PC-9 (cell line): ENCODE measurements at regions of chr16 and their contacts with region 1.

Region 1: GRCh38 chr16:1942810-1943726 is at the start of gene MSRB1:
- DNase-seq: peak; percentile 93 to 100
- H3K4me3 ChIP-seq: peak within 1 kb of the TSS; percentile 81
- H3K27ac ChIP-seq: peak within 1 kb of the TSS; percentile 61
- H3K4me1 ChIP-seq: peaks cover 18% of the 10 kb centered on the region
- H3K27me3 ChIP-seq: no peaks in the 10 kb centered on the region
- CTCF ChIP-seq: no peak
- total RNA-seq, gene MSRB1: 49.4 and 54.9 TPM in 2 replicates

Region 2: DNA sequence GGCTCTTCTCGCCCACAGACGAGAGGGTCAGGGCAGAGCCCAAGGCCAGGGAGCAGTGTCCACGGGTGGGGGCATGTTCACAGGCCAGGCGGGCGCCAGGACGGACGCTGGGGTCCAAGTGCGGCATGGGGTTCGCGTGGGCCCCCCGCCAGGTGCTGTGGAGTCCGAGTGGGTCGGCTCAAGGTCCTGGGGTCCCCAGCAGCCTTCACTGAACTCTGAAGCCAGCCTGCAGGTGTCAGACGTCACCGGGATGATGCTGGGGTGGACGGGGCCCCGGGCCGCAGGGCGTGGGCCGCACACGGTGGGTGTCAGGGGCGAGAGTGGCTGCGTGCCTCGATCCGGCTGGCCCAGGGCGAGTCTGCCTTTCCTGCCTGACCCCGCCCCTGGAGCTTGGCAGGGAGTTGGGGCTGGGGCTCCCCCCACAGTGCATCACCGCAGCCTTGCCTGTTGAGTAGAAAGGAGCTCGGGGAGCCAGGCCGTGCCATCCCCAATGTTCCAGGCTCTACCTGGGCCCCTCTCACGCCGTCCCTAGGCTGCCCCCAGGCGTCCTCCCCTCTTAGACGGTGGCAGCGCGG is 771.1 kb before region 1 on chr16:
- CTCF ChIA-PET with region 1: no interaction called
- POLR2A ChIA-PET with region 1: interaction called, 13 read pairs
- intact Hi-C with region 1: no loop called
- DNase-seq: no peak
- H3K4me3 ChIP-seq: no peak overlapping the region
- H3K27ac ChIP-seq: no peak overlapping the region
- H3K4me1 ChIP-seq: no peaks in the 10 kb centered on the region
- H3K27me3 ChIP-seq: peaks cover 82% of the 10 kb centered on the region
- CTCF ChIP-seq: no peak

Region 3: DNA sequence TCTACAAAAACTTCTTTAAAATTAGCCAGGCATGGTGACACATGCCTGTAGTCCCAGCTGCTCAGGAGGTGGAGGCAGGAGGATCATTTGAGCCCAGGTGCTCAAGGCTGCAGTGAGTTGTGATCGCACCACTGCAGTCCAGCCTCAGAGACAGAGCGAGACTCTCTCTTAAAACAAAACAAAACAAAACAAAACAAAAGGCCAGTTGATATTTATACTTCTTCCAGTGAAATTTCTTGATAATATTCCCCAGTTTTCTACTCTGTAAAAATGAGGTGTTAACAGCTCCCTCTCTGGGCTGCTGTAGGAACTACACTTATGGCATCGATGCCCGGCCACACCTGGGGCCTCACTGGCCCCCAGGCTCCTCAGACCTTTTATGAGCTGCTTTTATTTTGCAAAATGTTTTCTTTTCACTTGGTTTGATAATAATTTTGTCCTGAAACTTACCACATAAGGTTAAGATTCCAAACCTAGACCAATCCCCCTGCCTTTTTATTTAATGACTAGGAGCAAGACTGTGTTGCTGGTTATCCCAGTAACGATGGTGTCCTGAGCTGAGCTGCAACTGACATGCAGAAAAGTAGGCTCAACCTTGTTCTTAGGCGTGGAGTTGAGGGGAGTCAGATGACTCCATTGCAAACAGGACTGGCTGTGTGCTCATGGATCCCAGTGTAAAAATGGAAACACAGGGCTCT is 219.5 kb before region 1 on chr16:
- CTCF ChIA-PET with region 1: interaction called, 13 read pairs
- POLR2A ChIA-PET with region 1: no interaction called
- intact Hi-C with region 1: no loop called
- DNase-seq: peak in 1 of 2 experiments; percentile 68
- H3K4me3 ChIP-seq: no peak overlapping the region
- H3K27ac ChIP-seq: peak overlapping the region; percentile 67; the same call in 1 of the 2 replicates
- H3K4me1 ChIP-seq: peaks cover 42% of the 10 kb centered on the region
- H3K27me3 ChIP-seq: no peaks in the 10 kb centered on the region
- CTCF ChIP-seq: peak; percentile 90

Region 4: DNA sequence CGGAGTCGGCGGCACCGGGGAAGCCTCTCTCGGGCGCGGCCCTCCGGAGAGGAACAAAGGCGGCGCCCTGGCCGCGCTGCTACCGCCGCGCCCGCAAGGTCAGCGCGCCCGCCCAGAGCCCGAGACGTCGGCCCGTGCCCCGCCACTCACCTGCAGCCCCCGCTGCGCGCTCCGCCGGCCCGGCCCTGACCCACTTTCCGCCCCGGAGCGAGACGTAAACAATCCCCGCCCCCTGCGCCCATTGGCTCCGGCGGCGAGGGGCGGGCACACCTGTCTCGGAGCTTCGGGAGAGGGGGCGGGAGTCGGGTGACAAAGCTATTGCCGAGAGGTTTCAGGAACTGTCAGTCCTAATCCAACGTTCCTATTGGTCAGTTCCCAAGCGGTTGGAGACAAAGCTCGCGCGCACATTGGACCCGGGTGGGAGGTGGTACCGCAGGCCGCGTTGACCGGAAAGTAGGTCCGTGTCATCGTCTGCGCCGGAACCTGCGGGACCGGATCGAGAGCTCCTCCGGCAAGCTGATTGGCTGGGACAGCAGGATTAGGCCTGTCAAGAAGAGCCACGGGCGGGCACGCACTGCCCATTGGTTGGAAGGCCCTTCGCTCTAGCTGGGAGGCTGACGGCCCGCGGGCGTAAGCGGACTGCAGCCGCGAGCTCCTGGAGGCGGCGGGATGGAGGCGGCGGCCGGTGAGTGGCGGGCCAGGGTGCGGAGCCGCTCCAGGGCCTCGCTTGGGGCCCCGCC is 160.5 kb before region 1 on chr16 and contains the starts of genes NUBP2 and SPSB3:
- CTCF ChIA-PET with region 1: no interaction called
- POLR2A ChIA-PET with region 1: no interaction called
- intact Hi-C with region 1: loop called (anchors 5 kb)
- DNase-seq: peak; percentile 99 to 100
- H3K4me3 ChIP-seq: peak within 1 kb of the TSS; percentile 93
- H3K27ac ChIP-seq: peak within 1 kb of the TSS; percentile 50; the same call in 1 of the 2 replicates
- H3K4me1 ChIP-seq: peaks cover 15% of the 10 kb centered on the region
- H3K27me3 ChIP-seq: no peaks in the 10 kb centered on the region
- CTCF ChIP-seq: no peak
- total RNA-seq, gene NUBP2: 80.0 and 103 TPM in 2 replicates
- total RNA-seq, gene SPSB3: 58.2 and 86.6 TPM in 2 replicates

Region 5: DNA sequence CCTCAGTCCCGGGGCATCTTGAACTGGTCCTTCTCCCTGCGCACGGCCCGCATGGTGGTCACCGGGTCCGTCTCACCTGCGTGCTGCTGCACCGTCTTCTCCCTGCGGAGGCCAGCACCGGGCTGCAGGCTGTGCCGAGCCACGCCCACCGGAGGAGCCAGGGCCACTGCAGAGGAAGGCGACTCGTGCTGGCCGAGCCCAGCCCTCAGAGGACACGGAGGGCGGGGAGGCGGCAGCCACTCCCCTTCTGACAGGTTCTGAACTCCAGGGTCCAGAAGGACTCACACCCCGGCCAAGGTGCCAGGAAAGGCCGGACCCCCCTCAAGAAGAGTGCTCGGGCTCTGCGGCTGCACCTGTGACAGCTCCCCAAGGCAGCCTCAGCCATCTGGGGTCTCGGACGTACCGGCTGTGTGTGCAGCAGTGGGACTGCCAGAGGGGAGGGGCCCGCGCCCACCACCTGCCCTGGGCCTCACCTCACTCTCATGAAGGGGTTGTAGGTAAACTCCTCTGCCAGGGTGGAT is 133.7 kb before region 1 on chr16:
- CTCF ChIA-PET with region 1: no interaction called
- POLR2A ChIA-PET with region 1: no interaction called
- intact Hi-C with region 1: no loop called
- DNase-seq: no peak
- H3K4me3 ChIP-seq: no peak overlapping the region
- H3K27ac ChIP-seq: no peak overlapping the region
- H3K4me1 ChIP-seq: no peaks in the 10 kb centered on the region
- H3K27me3 ChIP-seq: no peaks in the 10 kb centered on the region
- CTCF ChIP-seq: no peak

Region 6: GRCh38 chr16:1959269-1960049 is 16.4 kb after region 1 on chr16 and contains the start of gene NDUFB10:
- CTCF ChIA-PET with region 1: no interaction called
- POLR2A ChIA-PET with region 1: interaction called, 3 read pairs
- intact Hi-C with region 1: loop called (anchors 2 kb)
- DNase-seq: peak; percentile 72 to 96
- H3K4me3 ChIP-seq: peak within 1 kb of the TSS; percentile 95
- H3K27ac ChIP-seq: peak within 1 kb of the TSS; percentile 1; the same call in 1 of the 2 replicates
- H3K4me1 ChIP-seq: peaks cover 12% of the 10 kb centered on the region
- H3K27me3 ChIP-seq: no peaks in the 10 kb centered on the region
- CTCF ChIP-seq: peak; percentile 68; the same call in 1 of the 2 replicates
- total RNA-seq, gene NDUFB10: 181 and 190 TPM in 2 replicates